ENCODE measurements at regions of chr3 and their contacts with region 1.

Region 1: DNA sequence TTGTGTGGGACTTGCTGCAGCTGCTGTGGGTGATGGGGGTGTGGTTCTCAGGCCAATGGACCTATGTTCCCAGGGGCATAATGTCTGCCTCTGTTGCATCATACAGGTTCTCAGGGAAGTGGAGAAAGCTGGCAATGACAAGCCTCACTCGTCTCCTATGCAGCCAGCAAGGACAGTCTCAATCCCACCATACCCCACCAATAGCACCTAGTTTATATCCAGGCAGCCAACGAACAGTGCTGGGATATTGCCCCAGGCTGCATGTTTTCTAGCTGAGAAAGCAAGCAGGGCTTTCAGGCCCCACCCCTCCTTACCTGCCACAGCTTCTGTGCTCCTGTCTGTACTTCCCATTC is 14.4 kb upstream of the OR5K2 start:
- DNase-seq: no peak
- ATAC-seq: no peak; the same call in 2 of the 3 replicates
- H3K4me3 ChIP-seq: no peak overlapping the region
- H3K27ac ChIP-seq: no peak overlapping the region
- H3K4me1 ChIP-seq: no peaks in the 10 kb centered on the region
- H3K27me3 ChIP-seq: no peaks in the 10 kb centered on the region
- CTCF ChIP-seq: no peak
- EP300 ChIP-seq: no peak
- POLR2A ChIP-seq: no peak
- RAD21 ChIP-seq: no peak

Region 2: DNA sequence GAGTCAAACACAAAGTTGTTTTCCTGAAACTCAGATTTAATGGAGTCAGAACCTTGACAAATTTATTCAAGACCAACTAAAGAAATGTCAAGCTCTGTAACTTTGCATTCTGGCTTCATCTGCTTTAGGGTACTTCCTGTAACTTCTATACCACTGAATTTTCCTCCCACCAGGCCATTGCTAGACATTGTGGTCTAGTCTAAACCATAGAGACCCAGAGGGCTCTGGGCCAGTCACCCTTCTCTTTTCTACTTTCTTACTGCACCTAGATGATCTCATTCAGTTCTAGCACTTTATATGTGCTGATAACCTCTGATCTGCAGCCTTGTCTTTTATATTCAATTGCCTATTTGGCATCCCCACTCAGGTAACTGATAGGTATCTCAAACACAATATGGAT is 22.9 kb before region 1 on chr3:
- CTCF ChIA-PET with region 1: no interaction called
- POLR2A ChIA-PET with region 1: no interaction called
- RAD21 ChIA-PET with region 1: no interaction called
- SMC1A ChIA-PET with region 1: interaction called, 10 read pairs
- in situ Hi-C with region 1: no loop called
- intact Hi-C with region 1: no loop called
- DNase-seq: no peak
- ATAC-seq: peak; percentile 52; the same call in 2 of the 3 replicates
- H3K4me3 ChIP-seq: no peak overlapping the region
- H3K27ac ChIP-seq: no peak overlapping the region
- H3K4me1 ChIP-seq: no peaks in the 10 kb centered on the region
- H3K27me3 ChIP-seq: no peaks in the 10 kb centered on the region
- CTCF ChIP-seq: no peak
- EP300 ChIP-seq: no peak
- POLR2A ChIP-seq: no peak
- RAD21 ChIP-seq: no peak

Region 3: DNA sequence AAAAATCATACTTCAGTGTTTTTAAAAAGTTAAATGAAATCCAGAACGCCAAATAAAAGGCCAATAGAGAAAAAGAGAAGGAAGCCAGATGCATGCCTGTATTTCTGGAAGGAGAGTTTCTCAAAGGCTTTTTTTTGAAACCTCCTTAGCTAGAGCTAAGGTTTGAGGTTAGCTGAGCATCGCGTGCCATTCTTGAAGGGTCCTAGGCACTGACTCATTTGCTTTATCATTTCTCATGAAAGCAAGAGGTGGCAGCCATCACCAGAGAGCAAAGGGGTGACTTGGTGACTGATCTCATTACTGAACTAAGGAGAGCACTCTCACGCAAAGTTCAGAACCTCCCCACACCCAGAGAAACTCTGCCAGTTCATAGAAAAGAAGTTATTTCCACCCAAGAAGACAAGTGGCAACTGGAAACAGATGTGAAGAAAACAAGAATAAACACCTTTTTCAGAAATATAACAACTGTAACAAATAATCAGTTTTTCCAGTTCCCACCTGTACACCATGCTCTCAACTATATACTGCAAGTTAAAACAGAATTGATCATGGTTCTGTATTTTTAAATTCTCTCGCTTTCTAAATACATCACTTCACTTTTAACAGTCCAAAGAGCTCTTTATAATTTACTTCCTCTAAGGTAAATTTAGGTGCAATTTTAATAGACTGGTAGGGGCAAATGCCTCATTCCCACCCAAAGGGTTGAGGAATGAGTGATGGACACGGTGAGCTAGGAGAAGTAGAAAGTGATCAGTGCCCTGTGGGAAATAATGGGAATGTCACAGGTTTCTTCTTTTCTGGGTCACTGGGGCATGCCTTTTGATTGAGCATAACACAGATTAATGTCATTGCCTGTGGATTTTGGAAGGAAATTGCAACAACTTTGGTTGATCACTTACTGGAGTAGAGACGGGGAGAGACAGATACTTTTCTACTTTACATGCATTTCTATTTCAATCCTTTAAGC is 73.3 kb after region 1 on chr3:
- CTCF ChIA-PET with region 1: no interaction called
- POLR2A ChIA-PET with region 1: no interaction called
- RAD21 ChIA-PET with region 1: no interaction called
- SMC1A ChIA-PET with region 1: no interaction called
- in situ Hi-C with region 1: no loop called
- intact Hi-C with region 1: no loop called
- DNase-seq: peak; percentile 99
- ATAC-seq: peak; percentile 55
- H3K4me3 ChIP-seq: peak overlapping the region; percentile 58
- H3K27ac ChIP-seq: peak overlapping the region; percentile 100
- H3K4me1 ChIP-seq: peaks cover 20% of the 10 kb centered on the region
- H3K27me3 ChIP-seq: no peaks in the 10 kb centered on the region
- CTCF ChIP-seq: no peak
- EP300 ChIP-seq: peak; percentile 100
- POLR2A ChIP-seq: peak; percentile 49; the same call in 1 of the 2 replicates
- RAD21 ChIP-seq: peak; percentile 35; the same call in 1 of the 2 replicates

Region 4: DNA sequence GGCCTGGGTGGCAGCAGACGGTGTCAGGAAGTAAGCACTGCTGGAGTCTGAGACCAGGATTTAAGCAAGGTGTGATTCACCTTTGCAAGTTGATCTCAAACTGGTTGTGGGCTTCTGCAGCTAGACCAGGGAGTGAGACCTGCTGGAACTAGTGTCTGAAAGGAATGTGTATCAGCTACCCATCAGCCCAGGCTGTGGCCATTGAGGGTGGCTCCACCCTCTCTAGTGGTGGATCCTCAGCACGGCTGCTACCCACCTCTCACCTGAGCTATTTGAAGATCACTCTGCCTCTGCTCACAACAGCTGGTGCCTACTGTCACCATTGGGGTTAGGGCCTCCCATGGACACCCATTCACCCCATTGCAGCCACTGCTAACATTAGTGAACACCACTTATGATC is 558.6 kb after region 1 on chr3:
- CTCF ChIA-PET with region 1: no interaction called
- POLR2A ChIA-PET with region 1: no interaction called
- RAD21 ChIA-PET with region 1: no interaction called
- SMC1A ChIA-PET with region 1: no interaction called
- in situ Hi-C with region 1: no loop called
- intact Hi-C with region 1: no loop called
- DNase-seq: no peak
- ATAC-seq: no peak
- H3K4me3 ChIP-seq: no peak overlapping the region
- H3K27ac ChIP-seq: no peak overlapping the region
- H3K4me1 ChIP-seq: no peaks in the 10 kb centered on the region
- H3K27me3 ChIP-seq: no peaks in the 10 kb centered on the region
- CTCF ChIP-seq: no peak
- EP300 ChIP-seq: no peak
- POLR2A ChIP-seq: no peak
- RAD21 ChIP-seq: no peak